HEK293 (cell line): ENCODE measurements at regions of chr16 and their contacts with region 1.

Region 1: GRCh38 chr16:72832621-72833248 is 215.2 kb downstream of the ZFHX3 start:
- H3K4me3 ChIP-seq: no peak overlapping the region
- H3K27ac ChIP-seq: no peak overlapping the region
- H3K4me1 ChIP-seq: peaks cover 5% of the 10 kb centered on the region; the same call in 1 of the 2 replicates
- CTCF ChIP-seq: peak; percentile 80

Region 2: DNA sequence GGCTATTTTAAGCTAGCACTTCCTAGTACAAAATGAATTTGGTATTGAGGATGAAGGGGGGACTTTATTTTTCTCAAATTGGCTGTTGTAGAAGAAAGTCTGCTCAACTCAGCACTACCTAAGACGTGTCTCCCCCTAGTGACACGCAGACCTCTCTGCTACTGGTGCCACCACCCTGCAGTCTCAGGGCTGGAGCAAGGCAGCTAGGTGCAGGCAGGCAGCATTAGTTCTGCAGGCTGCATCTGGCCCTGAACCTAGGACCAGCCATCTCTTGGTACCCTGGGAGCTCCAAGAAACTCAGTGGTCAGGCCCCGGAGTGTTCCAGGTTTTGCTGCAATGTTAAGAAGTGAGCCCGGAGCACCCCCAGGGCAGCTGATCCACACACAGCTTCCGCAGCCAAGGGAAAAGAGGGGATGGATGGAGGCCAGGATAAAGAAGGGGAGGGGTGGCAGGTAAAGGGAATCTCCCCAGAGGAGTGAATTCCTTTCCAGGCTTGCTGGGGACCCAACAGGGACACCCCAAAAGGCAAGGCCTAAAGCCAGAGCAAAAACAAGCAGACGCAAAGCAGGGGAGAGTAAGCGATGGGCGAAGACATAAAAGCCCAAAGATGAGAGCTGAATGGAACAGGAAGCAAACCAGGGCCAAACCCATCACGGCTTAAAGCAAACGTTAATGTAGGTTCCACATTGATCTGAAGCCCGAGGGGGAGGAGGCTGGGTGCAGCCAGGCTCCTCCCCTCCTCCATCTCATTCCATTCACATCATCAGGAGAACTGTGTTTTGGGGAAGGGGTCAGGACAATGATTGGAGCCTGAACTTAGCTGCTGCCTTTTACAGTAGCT is 14.7 kb after region 1 on chr16:
- CTCF ChIA-PET with region 1: interaction called, 54 read pairs
- POLR2A ChIA-PET with region 1: no interaction called
- H3K4me3 ChIP-seq: no peak overlapping the region
- H3K27ac ChIP-seq: no peak overlapping the region
- H3K4me1 ChIP-seq: peaks cover 4% of the 10 kb centered on the region; the same call in 1 of the 2 replicates
- CTCF ChIP-seq: peak; percentile 64

Region 3: GRCh38 chr16:72932050-72932449 is 99.3 kb after region 1 on chr16:
- CTCF ChIA-PET with region 1: interaction called, 15 read pairs
- POLR2A ChIA-PET with region 1: no interaction called
- H3K4me3 ChIP-seq: no peak overlapping the region
- H3K27ac ChIP-seq: no peak overlapping the region
- H3K4me1 ChIP-seq: peaks cover 26% of the 10 kb centered on the region
- CTCF ChIP-seq: no peak

Region 4: DNA sequence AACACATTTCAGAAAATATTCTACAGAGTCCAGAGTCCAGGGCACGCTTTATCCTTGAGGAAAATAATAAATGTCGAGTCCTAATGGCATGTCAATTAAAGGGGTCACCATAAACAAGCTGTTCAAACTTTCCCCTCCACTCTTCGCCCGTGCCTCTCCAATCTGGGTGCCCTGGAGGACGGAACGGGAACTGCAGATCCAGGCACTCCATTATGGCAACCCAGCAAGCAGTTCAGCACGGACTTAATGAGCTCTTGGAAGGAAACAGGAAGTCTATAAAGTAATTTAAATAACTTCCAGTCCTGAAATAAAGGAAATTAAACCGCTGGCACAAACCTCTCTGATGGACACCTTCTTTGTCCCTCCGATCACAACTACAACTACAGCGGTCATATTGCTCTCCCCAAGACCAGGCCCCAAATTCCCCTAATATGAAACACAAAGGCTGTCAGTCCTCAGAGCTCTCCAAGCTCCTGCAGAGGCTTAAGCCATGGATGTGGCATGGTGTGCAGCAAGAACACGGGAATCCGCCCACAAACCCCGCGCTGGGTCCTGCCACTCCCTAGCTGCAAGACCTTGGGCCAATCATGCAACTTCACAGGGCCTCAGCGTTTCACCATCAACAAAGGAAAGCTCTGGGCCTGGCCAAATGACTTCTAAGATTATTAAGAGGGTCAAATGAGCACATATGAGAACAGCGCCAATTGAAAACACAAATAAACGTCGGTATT is 162.6 kb after region 1 on chr16:
- CTCF ChIA-PET with region 1: interaction called, 14 read pairs
- POLR2A ChIA-PET with region 1: no interaction called
- H3K4me3 ChIP-seq: no peak overlapping the region
- H3K27ac ChIP-seq: no peak overlapping the region
- H3K4me1 ChIP-seq: peaks cover 6% of the 10 kb centered on the region
- CTCF ChIP-seq: no peak